CD8-positive, alpha-beta T cell (primary cell): ENCODE measurements at regions of chr9 and their contacts with region 1.

Region 1: DNA sequence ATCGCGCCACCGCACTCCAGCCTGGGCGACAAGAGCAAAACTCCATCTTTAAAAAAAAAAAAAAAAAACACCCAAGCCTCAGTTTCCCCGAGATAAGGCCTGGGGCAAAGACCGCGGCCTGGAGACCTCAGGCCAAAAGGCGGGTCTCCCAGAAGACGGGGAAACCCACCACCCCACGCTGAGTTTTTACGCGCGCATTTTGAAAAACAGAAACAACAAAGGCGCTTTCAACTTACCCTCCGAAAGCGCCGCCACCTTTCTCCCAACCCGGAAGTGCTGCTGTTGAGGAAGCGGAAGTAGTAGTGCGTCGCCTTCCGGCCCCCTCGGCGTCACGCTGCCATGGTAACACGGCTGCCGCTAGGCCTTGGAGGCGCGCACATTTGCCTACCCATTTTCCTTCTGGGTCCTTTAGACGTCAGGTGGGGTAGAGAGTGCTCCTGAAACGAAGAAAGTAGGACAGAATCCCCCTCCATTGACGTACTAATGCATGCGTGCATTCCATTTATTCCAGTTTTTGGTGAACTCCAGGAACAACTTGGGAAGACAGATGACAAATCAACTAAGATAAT is at the start of gene TTF1:
- DNase-seq: peak; percentile 84 to 97 (median 94)
- ATAC-seq: peak; percentile 79
- H3K4me3 ChIP-seq: peak within 1 kb of the TSS; percentile 65 to 76
- H3K4me3 Mint-ChIP-seq: peak within 1 kb of the TSS; percentile 93
- H3K27ac ChIP-seq: peak within 1 kb of the TSS; percentile 42 to 56
- H3K27ac Mint-ChIP-seq: peak within 1 kb of the TSS; percentile 91
- H3K4me1 ChIP-seq: peaks cover 56% of the 10 kb centered on the region
- H3K4me1 Mint-ChIP-seq: peaks cover 58% of the 10 kb centered on the region
- H3K27me3 ChIP-seq: peaks cover 10 to 12% of the 10 kb centered on the region in 2 experiments
- H3K27me3 Mint-ChIP-seq: peaks cover 11% of the 10 kb centered on the region
- CTCF ChIP-seq: no peak
- total RNA-seq, gene TTF1: 14.5 to 15.0 TPM

Region 2: GRCh38 chr9:132354637-132355355 is 51.8 kb before region 1 on chr9 and contains the start of gene SETX:
- CTCF ChIA-PET with region 1: no interaction called
- POLR2A ChIA-PET with region 1: no interaction called
- intact Hi-C with region 1: loop called (anchors 1 kb)
- DNase-seq: peak; percentile 92 to 99 (median 97)
- ATAC-seq: peak; percentile 83
- H3K4me3 ChIP-seq: peak within 1 kb of the TSS; percentile 77 to 86
- H3K4me3 Mint-ChIP-seq: peak within 1 kb of the TSS; percentile 87
- H3K27ac ChIP-seq: peak within 1 kb of the TSS; percentile 94 to 97
- H3K27ac Mint-ChIP-seq: peak within 1 kb of the TSS; percentile 98
- H3K4me1 ChIP-seq: peaks cover 40% of the 10 kb centered on the region
- H3K4me1 Mint-ChIP-seq: peaks cover 44% of the 10 kb centered on the region
- H3K27me3 ChIP-seq: no peaks in the 10 kb centered on the region
- H3K27me3 Mint-ChIP-seq: no peaks in the 10 kb centered on the region
- CTCF ChIP-seq: no peak
- total RNA-seq, gene SETX: 37.5 to 40.7 TPM

Region 3: GRCh38 chr9:132367613-132368313 is 38.9 kb before region 1 on chr9:
- CTCF ChIA-PET with region 1: no interaction called
- POLR2A ChIA-PET with region 1: no interaction called
- intact Hi-C with region 1: no loop called
- DNase-seq: no peak
- ATAC-seq: no peak
- H3K4me3 ChIP-seq: no peak overlapping the region
- H3K4me3 Mint-ChIP-seq: no peak overlapping the region
- H3K27ac ChIP-seq: no peak overlapping the region
- H3K27ac Mint-ChIP-seq: no peak overlapping the region
- H3K4me1 ChIP-seq: peaks cover 3% of the 10 kb centered on the region
- H3K4me1 Mint-ChIP-seq: peaks cover 5% of the 10 kb centered on the region
- H3K27me3 ChIP-seq: no peaks in the 10 kb centered on the region
- H3K27me3 Mint-ChIP-seq: no peaks in the 10 kb centered on the region
- CTCF ChIP-seq: no peak

Region 4: DNA sequence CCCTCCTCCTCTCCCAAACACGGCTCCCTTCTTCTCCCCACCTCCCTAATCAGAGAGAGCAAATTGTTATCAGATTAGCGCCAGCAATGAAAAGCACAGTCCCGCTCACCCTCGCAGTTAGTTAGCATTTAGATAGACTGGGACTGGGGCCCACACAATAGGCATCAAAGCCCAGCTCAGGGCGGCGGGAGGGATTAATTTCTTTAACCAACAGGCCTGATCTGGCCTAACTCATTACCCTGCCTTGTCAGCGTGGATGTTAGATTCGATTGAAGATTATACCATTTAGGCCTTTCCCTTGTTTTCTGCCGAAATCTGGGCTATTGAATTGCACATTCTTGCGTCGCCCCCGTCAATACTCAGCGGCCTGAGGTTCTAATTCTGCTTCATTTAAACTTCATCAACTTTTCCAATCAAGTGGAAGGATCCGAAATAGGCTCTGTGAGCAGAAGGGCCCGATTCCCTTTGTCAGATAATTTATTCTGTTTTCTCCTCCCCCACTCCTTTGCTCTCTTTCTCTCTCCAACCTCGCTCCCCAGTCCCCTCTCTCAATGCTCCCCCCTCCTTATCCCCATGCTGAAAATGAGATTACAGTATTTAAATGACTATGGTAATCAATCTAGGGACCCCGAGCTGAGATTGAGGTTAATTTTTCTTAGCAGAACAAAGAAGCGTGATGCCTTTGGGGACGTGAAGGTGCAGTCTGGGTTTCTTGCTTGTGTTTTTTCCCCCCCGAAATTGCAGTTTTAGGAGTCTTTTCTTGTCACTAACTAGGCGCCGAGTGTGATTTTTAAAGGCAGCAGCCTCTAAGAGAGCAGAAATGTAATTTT is 18.4 kb after region 1 on chr9:
- CTCF ChIA-PET with region 1: no interaction called
- POLR2A ChIA-PET with region 1: no interaction called
- intact Hi-C with region 1: no loop called
- DNase-seq: no peak
- ATAC-seq: no peak
- H3K4me3 ChIP-seq: no peak overlapping the region
- H3K4me3 Mint-ChIP-seq: no peak overlapping the region
- H3K27ac ChIP-seq: no peak overlapping the region
- H3K27ac Mint-ChIP-seq: no peak overlapping the region
- H3K4me1 ChIP-seq: no peaks in the 10 kb centered on the region
- H3K4me1 Mint-ChIP-seq: no peaks in the 10 kb centered on the region
- H3K27me3 ChIP-seq: peaks cover 0 to 6% of the 10 kb centered on the region in 2 experiments
- H3K27me3 Mint-ChIP-seq: peaks cover 45% of the 10 kb centered on the region
- CTCF ChIP-seq: no peak

Region 5: DNA sequence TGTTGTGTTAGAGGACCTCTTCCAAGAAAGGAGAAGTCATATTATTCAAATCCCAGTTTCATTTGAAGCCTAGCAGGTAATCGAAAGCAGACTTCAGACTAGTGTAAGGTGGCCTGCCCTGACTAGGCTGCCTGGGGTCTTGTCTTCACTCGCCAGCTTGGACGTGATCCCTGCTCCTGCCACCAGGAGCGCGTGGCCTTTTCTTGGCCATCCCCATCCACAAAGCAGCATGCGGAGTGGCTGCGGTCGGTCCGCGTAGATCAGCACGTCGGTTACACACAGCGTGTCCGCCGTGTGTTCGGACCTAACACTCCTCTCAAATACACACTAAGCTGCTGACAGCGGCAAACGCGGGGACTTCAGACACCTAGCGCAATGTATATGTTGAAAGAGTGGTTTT is 40.7 kb after region 1 on chr9:
- CTCF ChIA-PET with region 1: no interaction called
- POLR2A ChIA-PET with region 1: no interaction called
- intact Hi-C with region 1: no loop called
- DNase-seq: no peak
- ATAC-seq: no peak
- H3K4me3 ChIP-seq: no peak overlapping the region
- H3K4me3 Mint-ChIP-seq: no peak overlapping the region
- H3K27ac ChIP-seq: no peak overlapping the region
- H3K27ac Mint-ChIP-seq: no peak overlapping the region
- H3K4me1 ChIP-seq: peaks cover 3% of the 10 kb centered on the region
- H3K4me1 Mint-ChIP-seq: peaks cover 4% of the 10 kb centered on the region
- H3K27me3 ChIP-seq: peaks cover 4 to 15% of the 10 kb centered on the region in 2 experiments
- H3K27me3 Mint-ChIP-seq: peaks cover 42% of the 10 kb centered on the region
- CTCF ChIP-seq: no peak

Region 6: DNA sequence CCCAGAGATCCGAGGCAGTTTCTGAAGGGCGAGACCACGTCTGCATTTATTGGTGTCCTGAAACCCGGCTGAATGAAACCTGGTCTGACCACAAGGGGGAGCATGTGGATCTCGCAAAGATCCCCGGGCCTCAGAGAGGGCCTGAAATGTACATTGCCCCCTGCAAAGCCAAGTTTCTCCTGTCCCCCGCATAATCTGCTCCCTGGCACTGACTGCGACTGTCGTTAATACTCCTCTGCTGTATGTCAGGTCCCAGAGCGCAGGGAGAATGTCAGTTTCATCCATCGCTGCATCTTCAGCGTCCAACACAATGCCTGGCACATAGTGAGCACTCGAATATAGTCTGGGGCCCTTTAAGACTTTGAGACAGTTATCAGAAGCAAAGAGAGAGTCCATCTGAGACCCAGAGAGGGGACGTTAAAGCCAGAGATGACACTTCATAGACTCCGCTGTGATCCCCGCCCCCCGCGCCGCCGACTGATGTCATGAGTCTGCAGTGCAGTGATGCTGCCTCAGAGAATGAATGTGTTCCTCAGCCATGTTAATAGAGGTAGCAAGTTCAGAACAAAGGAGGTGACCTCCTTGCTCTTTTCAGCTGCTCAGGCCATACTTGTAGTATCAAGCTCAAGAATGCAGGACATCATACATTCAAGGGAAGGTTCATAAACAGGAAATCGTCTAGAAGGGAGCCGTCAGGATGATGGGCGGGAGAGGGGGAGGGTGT is 101.3 kb after region 1 on chr9:
- CTCF ChIA-PET with region 1: no interaction called
- POLR2A ChIA-PET with region 1: no interaction called
- intact Hi-C with region 1: loop called in 1 of 2 experiments (anchors 1 kb)
- DNase-seq: peak; percentile 33 to 79 (median 70)
- ATAC-seq: peak; percentile 58
- H3K4me3 ChIP-seq: no peak overlapping the region
- H3K4me3 Mint-ChIP-seq: no peak overlapping the region
- H3K27ac ChIP-seq: no peak overlapping the region
- H3K27ac Mint-ChIP-seq: no peak overlapping the region
- H3K4me1 ChIP-seq: peaks cover 11% of the 10 kb centered on the region
- H3K4me1 Mint-ChIP-seq: peaks cover 10% of the 10 kb centered on the region
- H3K27me3 ChIP-seq: peaks cover 2% of the 10 kb centered on the region in 2 experiments
- H3K27me3 Mint-ChIP-seq: peaks cover 13% of the 10 kb centered on the region
- CTCF ChIP-seq: peak; percentile 74

Region 7: DNA sequence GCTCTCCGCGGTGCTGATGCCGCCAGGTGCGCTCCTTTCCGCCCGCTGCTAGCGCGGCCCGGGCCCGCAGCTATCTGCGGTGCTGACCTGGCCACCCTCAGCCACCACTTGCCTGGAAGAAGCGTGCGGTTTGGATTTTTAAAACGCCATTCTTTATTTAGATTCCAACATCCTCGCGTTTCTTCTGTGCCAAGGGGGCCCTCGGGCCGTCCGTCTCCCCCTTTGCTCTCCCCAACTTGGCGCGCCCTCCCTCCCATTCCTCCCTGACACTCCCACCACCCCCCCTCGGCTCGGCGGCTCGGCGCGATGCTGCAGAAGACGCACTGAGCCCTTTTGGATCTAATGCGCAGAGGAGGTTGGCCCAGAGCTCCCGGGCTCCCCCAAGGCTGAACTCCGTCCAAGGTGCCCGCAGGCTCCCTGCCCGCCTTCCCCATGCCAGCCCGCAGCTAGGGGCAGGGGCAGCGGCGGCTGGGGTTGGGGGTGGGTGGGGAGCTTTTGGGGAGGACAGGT is 175.7 kb after region 1 on chr9 and contains the start of gene BARHL1:
- CTCF ChIA-PET with region 1: no interaction called
- POLR2A ChIA-PET with region 1: no interaction called
- intact Hi-C with region 1: loop called in 1 of 2 experiments (anchors 2 kb)
- DNase-seq: no peak
- ATAC-seq: no peak
- H3K4me3 ChIP-seq: peak within 1 kb of the TSS; percentile 20 to 39
- H3K4me3 Mint-ChIP-seq: peak within 1 kb of the TSS; percentile 74
- H3K27ac ChIP-seq: no peak within 1 kb of the TSS
- H3K27ac Mint-ChIP-seq: no peak within 1 kb of the TSS
- H3K4me1 ChIP-seq: peaks cover 12% of the 10 kb centered on the region
- H3K4me1 Mint-ChIP-seq: peaks cover 9% of the 10 kb centered on the region
- H3K27me3 ChIP-seq: peaks cover 64 to 70% of the 10 kb centered on the region in 2 experiments
- H3K27me3 Mint-ChIP-seq: peaks cover 60% of the 10 kb centered on the region
- CTCF ChIP-seq: no peak
- total RNA-seq, gene BARHL1: not detected

Region 8: DNA sequence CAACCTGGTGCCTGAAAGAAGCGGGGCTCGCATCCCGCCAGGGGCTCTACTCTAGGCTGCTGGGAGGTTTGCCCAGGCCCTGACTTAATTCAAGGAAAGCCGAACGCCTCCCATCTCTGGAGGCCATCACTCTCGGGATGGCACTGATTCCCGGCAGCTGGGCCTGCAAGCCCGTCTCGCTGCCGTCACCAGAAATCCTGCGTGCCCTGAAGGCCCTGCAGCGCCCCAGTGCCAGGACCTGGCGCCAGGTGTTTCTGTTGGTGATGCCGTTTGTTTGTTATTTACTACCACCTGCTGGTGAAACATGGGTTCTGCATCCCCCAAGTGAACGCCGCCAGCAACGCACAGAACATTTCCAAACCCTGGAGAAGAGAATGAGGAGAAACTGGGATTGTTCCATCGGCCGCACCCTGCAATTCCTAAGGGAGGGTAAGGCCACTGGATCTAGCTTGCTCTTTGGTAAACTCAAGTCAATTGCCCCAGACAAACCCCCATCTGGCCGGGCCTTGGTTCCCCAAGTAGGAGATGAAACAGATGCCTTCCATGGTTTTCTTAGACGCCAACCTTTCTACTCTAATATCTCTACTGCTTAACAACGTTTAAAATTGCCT is 393.5 kb after region 1 on chr9:
- CTCF ChIA-PET with region 1: interaction called, 5 read pairs
- POLR2A ChIA-PET with region 1: no interaction called
- intact Hi-C with region 1: loop called in 1 of 2 experiments (anchors 1 kb)
- DNase-seq: peak; percentile 35 to 82 (median 65)
- ATAC-seq: peak; percentile 97
- H3K4me3 ChIP-seq: no peak overlapping the region
- H3K4me3 Mint-ChIP-seq: no peak overlapping the region
- H3K27ac ChIP-seq: no peak overlapping the region
- H3K27ac Mint-ChIP-seq: no peak overlapping the region
- H3K4me1 ChIP-seq: no peaks in the 10 kb centered on the region
- H3K4me1 Mint-ChIP-seq: peaks cover 9% of the 10 kb centered on the region
- H3K27me3 ChIP-seq: peaks cover 4 to 8% of the 10 kb centered on the region in 2 experiments
- H3K27me3 Mint-ChIP-seq: peaks cover 26% of the 10 kb centered on the region
- CTCF ChIP-seq: peak; percentile 76

Region 9: DNA sequence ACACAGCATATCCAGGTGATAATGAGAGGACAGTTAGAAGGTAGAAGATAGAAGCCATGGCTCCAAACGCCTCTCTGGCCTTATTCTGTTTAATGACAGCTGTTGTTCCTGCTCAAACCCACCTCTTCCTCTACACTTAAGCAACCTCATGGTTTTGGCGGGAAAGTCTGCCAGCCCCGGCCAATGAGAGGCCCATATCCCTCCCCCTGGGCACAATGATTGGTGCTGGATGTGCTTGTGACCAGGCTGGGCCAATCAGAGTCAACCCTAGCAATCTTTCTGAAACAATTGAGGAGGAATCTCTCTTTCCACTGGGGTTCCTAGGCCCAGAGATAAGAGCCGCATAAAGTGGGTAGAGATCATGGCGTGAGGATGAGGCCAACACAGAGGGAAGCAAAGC is 567.1 kb after region 1 on chr9:
- CTCF ChIA-PET with region 1: no interaction called
- POLR2A ChIA-PET with region 1: no interaction called
- intact Hi-C with region 1: loop called in 1 of 2 experiments (anchors 1 kb)
- DNase-seq: peak in 1 of 9 experiments; percentile 28
- ATAC-seq: peak; percentile 41
- H3K4me3 ChIP-seq: no peak overlapping the region
- H3K4me3 Mint-ChIP-seq: no peak overlapping the region
- H3K27ac ChIP-seq: no peak overlapping the region
- H3K27ac Mint-ChIP-seq: no peak overlapping the region
- H3K4me1 ChIP-seq: peaks cover 3% of the 10 kb centered on the region
- H3K4me1 Mint-ChIP-seq: peaks cover 4% of the 10 kb centered on the region
- H3K27me3 ChIP-seq: peaks cover 6 to 8% of the 10 kb centered on the region in 2 experiments
- H3K27me3 Mint-ChIP-seq: peaks cover 19% of the 10 kb centered on the region
- CTCF ChIP-seq: no peak

Region 10: DNA sequence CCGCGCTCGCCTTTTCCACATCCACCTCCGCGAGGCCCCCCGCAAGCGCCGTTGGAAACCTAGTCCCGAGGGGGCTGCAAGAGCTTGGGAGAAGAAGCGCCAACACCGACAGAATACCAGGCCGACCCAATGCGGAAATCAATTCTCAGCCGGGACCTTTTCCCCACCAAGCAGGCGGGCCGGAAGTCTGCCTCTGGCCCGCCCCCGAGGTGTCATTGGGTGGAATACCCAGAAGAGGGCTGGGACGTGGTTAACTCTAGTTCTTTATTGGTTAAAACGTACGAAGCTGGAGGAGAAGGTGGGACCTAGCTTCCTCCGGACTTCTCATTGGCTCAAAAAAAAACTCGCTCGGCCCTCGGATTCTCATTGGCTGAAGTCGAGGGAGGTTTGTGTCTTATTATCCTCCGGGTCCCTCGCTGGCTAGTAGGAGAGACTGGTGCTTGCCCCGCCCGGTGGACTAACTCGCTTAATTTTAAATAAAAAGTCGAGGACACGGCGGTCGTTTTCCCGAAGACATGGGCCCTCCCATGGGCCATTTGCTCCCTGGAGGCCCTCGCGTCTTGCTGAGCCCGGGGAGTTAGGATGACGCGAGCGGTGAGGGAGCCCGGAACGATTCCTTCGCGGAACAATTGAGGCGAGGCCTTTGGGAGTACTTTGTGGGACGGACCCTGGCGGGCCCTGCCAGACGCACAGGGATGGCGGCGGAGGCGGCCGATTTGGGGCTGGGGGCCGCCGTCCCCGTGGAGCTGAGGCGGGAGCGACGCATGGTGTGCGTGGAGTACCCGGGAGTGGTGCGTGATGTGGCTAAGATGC is 623.9 kb after region 1 on chr9 and contains the start of gene GTF3C5:
- CTCF ChIA-PET with region 1: no interaction called
- POLR2A ChIA-PET with region 1: no interaction called
- intact Hi-C with region 1: loop called in 1 of 2 experiments (anchors 2 kb)
- DNase-seq: peak; percentile 80 to 98 (median 91)
- ATAC-seq: peak; percentile 97
- H3K4me3 ChIP-seq: peak within 1 kb of the TSS; percentile 60 to 96
- H3K4me3 Mint-ChIP-seq: peak within 1 kb of the TSS; percentile 99
- H3K27ac ChIP-seq: peak within 1 kb of the TSS; percentile 75 to 94
- H3K27ac Mint-ChIP-seq: peak within 1 kb of the TSS; percentile 98
- H3K4me1 ChIP-seq: peaks cover 27% of the 10 kb centered on the region
- H3K4me1 Mint-ChIP-seq: peaks cover 54% of the 10 kb centered on the region
- H3K27me3 ChIP-seq: no peaks in the 10 kb centered on the region
- H3K27me3 Mint-ChIP-seq: no peaks in the 10 kb centered on the region
- CTCF ChIP-seq: no peak
- total RNA-seq, gene GTF3C5: 54.1 to 58.7 TPM